CD4-positive, alpha-beta memory T cell (primary cell): ENCODE measurements at regions of chr19 and their contacts with region 1.

Region 1: DNA sequence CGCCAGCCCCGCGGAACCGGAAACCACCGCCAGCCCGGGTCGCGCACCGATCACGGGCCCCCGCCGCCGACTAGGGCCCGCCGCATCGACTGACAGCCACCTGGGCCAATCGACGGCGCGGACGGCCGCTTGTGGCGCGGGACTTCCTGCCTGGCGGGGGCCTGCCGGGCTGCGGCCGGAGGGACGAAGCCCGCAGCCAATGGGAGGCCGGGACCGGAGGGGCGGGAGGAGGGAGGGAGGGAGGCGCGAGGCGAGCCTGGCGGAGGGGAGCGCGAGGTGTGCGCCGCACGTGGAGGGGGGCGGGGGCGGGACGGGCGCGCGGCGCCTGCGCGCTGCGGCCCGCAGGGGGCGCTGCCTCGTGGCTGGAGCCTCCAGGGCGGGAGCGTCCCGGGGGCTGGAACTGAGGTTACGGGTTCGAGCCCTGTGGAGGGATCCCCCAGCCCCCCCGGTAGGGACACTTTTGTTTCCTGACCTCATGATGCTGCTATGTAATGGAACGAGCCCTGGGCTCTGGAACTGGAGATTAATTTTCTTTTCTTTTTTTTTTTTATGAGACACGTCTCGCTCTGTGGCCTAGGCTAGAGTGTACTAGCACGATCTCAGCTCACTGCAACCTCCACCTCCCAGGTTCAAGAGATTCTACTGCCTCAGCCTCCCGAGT is at the start of gene MLLT1:
- DNase-seq: peak; percentile 91 to 94 (median 93)
- H3K4me3 ChIP-seq: peak within 1 kb of the TSS; percentile 23 to 57
- H3K4me3 Mint-ChIP-seq: peak within 1 kb of the TSS; percentile 75 to 91 (median 90)
- H3K27ac ChIP-seq: peak within 1 kb of the TSS; percentile 59
- H3K27ac Mint-ChIP-seq: peak within 1 kb of the TSS; percentile 79 to 99 (median 96)
- H3K4me1 ChIP-seq: peaks cover 39% of the 10 kb centered on the region
- H3K4me1 Mint-ChIP-seq: peaks cover 29 to 45% (median 36%) of the 10 kb centered on the region in 4 donors
- H3K27me3 ChIP-seq: no peaks in the 10 kb centered on the region
- H3K27me3 Mint-ChIP-seq: peaks cover 0 to 2% of the 10 kb centered on the region in 2 donors
- total RNA-seq, gene MLLT1: 41.1 to 41.7 TPM

Region 2: DNA sequence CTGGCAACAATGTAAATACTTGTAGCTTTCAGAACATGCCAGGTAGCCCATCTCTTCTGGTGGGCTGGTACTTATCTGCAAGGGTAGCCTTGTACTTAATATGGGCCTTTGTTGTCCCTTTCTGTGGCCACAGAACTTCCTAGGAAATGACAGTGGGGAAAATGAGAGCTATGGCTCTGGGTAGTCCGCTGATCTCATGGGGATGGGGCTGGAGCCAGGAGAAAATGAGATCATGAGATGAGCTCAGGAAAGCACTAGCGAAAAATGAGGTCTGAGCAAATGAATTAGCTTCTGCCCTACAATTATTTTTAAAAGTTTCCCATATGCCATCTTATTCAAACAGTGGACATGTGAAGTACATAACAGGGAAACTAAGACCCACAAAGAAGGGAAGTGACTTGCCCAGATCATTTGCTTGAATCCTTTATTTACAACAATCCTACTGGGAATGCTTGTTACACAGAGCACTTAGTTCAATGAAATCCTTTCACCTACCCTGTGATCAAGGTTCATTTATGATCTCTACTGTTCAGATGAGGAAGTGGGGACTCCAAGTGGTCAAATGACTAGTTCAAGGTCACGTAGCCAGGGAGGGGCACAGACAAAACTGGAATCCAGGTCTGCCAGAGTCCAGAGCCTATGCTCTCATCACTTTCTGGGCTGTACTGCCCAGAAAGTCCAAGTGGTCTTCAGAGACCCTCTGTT is 1026.5 kb before region 1 on chr19:
- CTCF ChIA-PET with region 1: no interaction called
- POLR2A ChIA-PET with region 1: no interaction called
- intact Hi-C with region 1: no loop called
- DNase-seq: no peak
- H3K4me3 ChIP-seq: no peak overlapping the region
- H3K4me3 Mint-ChIP-seq: no peak overlapping the region
- H3K27ac ChIP-seq: no peak overlapping the region
- H3K27ac Mint-ChIP-seq: no peak overlapping the region
- H3K4me1 ChIP-seq: no peaks in the 10 kb centered on the region
- H3K4me1 Mint-ChIP-seq: no peaks in the 10 kb centered on the region
- H3K27me3 ChIP-seq: no peaks in the 10 kb centered on the region
- H3K27me3 Mint-ChIP-seq: peaks cover 3 to 4% of the 10 kb centered on the region in 2 donors

Region 3: DNA sequence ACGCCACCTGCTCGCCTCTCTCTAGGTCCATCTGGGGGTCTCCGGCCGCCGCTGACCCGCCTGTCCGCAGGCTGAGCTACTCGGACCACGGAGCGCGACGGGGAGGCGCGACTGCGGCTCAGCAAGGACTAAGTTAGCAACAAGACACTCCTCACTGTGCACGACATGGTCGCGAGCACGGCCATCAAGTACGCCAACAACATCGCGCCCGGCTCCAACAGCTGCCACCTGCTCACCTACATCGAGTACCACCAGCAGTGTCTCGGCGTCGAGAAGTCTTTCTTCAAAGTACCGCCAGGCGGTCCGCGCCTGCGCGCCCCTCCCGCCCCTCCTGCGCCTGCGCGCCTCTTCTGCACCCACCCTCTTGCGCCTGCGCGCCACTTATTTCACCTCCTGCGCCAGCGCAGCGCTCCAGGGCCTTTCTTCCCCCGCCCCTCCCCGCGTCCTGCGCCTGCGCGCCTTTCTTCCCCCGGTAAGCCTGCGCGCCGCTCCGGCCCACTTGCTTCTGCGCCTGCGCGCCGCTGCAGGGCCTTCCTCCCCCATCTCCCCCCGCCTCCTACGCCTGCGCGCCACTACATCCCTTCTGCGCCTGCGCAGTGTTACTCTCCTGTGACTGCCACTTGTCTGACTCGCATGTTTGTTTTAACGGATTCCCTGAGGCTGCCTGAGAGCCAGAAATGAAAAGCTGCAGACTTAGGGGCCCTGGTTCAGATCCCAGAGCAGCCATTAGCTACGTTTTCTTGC is 80.6 kb before region 1 on chr19:
- CTCF ChIA-PET with region 1: no interaction called
- POLR2A ChIA-PET with region 1: no interaction called
- intact Hi-C with region 1: loop called (anchors 1 kb)
- DNase-seq: peak; percentile 99 to 100 (median 99)
- H3K4me3 ChIP-seq: peak overlapping the region; percentile 52 to 89
- H3K4me3 Mint-ChIP-seq: peak overlapping the region; percentile 88 to 97 (median 94)
- H3K27ac ChIP-seq: peak overlapping the region; percentile 64
- H3K27ac Mint-ChIP-seq: peak overlapping the region; percentile 83 to 98 (median 95)
- H3K4me1 ChIP-seq: peaks cover 13% of the 10 kb centered on the region
- H3K4me1 Mint-ChIP-seq: peaks cover 10 to 21% (median 10%) of the 10 kb centered on the region in 4 donors
- H3K27me3 ChIP-seq: peaks cover 2% of the 10 kb centered on the region
- H3K27me3 Mint-ChIP-seq: peaks cover 2 to 4% of the 10 kb centered on the region in 2 donors

Region 4: GRCh38 chr19:6212403-6213265 is 67.4 kb before region 1 on chr19:
- CTCF ChIA-PET with region 1: no interaction called
- POLR2A ChIA-PET with region 1: no interaction called
- intact Hi-C with region 1: no loop called
- DNase-seq: no peak
- H3K4me3 ChIP-seq: no peak overlapping the region
- H3K4me3 Mint-ChIP-seq: no peak overlapping the region
- H3K27ac ChIP-seq: no peak overlapping the region
- H3K27ac Mint-ChIP-seq: peak overlapping the region in 1 of 7 donors; percentile 53
- H3K4me1 ChIP-seq: no peaks in the 10 kb centered on the region
- H3K4me1 Mint-ChIP-seq: no peaks in the 10 kb centered on the region
- H3K27me3 ChIP-seq: no peaks in the 10 kb centered on the region
- H3K27me3 Mint-ChIP-seq: no peaks in the 10 kb centered on the region

Region 5: GRCh38 chr19:6249296-6249695 is 30.8 kb before region 1 on chr19:
- CTCF ChIA-PET with region 1: no interaction called
- POLR2A ChIA-PET with region 1: no interaction called
- intact Hi-C with region 1: no loop called
- DNase-seq: no peak
- H3K4me3 ChIP-seq: no peak overlapping the region
- H3K4me3 Mint-ChIP-seq: no peak overlapping the region
- H3K27ac ChIP-seq: no peak overlapping the region
- H3K27ac Mint-ChIP-seq: no peak overlapping the region
- H3K4me1 ChIP-seq: peaks cover 4% of the 10 kb centered on the region
- H3K4me1 Mint-ChIP-seq: peaks cover 15 to 59% (median 44%) of the 10 kb centered on the region in 4 donors
- H3K27me3 ChIP-seq: no peaks in the 10 kb centered on the region
- H3K27me3 Mint-ChIP-seq: no peaks in the 10 kb centered on the region

Region 6: DNA sequence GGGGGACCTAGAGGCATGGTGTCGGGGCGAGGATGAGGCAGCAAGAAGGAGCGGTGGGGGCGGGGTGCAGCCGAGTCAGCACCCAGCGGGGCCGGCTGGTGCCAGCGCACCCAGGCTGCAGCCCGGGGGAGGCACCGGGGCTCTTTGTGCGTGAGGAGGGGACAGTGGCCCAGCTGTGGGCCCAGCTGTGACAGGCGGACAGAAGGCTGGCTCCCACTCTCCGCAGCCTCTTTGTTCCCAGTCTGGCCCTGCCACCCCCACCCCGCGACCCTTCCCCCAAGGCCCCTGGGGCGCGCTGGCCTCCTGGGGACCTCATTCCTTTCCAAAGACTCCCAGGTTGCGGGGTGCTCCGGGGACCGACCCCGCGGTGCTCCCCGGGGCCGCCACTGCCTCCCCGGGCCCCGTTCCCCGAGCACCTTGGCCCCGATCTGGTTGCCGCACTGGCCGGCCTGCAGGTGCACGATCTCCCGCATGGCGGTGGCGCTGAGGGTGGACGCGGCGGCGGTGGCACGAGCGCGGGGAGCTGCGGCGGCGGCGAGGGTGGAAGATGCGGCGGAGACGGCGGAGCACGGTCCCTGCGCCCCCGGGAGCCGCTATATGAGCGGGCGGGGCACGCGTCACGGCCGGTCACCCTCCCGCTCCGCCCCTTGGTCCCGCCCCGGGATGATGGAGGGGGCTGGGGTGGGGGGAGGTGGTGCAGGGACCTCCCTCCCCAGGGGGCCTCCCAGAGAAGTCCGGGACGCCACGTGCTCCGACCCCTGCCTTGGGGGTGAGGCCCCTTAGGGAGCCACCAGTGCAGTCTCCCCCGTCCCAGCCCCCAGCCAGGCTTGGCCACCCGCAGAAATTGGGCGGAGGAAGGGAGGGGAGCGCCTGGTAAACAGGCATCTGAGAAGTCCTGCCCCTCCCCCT is 221.9 kb after region 1 on chr19 and contains the start of gene TUBB4A:
- CTCF ChIA-PET with region 1: no interaction called
- POLR2A ChIA-PET with region 1: no interaction called
- intact Hi-C with region 1: loop called (anchors 5 kb)
- DNase-seq: peak in 3 of 5 donors; percentile 15 to 21 (median 17)
- H3K4me3 ChIP-seq: peak within 1 kb of the TSS in 1 of 2 donors; percentile 41
- H3K4me3 Mint-ChIP-seq: peak within 1 kb of the TSS; percentile 79 to 88 (median 84)
- H3K27ac ChIP-seq: no peak within 1 kb of the TSS
- H3K27ac Mint-ChIP-seq: peak within 1 kb of the TSS in 2 of 7 donors; percentile 42 to 81
- H3K4me1 ChIP-seq: peaks cover 18% of the 10 kb centered on the region
- H3K4me1 Mint-ChIP-seq: peaks cover 12 to 22% (median 16%) of the 10 kb centered on the region in 4 donors
- H3K27me3 ChIP-seq: peaks cover 7% of the 10 kb centered on the region
- H3K27me3 Mint-ChIP-seq: peaks cover 2 to 15% of the 10 kb centered on the region in 2 donors
- total RNA-seq, gene TUBB4A: 3.9 to 4.7 TPM

Region 7: DNA sequence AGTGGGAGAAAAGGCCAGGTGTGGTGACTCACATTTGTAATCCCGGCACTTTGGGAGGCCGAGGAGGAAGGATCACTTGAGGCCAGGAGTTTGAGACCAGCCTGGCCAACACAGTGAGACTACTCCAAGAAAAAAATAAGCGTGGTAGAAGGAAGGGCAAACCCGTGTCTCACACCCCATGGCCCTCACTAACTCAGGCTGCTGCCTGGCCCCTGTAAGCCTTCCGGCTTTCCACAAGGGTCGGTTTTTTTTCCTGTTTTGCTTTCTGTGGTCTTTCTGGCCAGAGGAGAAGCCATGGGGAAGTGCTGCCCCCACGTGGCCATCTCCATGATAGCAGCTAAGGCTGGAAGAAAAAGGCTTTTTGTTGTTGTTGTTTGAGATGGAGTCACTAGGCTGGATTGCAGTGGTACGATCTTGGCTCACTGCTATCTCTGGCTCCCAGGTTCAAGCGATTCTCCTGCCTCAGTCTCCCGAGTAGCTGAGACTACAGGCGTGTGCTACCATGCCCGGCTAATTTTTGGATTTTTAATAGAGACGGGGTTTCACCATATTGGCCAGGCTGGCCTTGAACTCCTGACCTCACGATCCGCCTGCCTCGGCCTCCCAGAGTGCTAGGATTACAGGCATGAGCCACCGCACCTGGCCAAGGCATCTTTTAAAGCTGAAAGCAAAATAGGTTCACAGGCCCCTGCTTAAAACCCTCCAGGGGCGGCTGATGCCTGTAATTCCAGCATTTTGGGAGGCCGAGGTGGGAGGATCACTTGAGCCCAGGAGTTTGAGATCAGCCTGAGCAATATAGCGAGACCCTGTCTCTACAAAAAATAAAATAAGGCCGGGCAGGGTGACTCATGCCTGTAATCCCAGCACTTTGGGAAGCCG is 1061.1 kb after region 1 on chr19:
- CTCF ChIA-PET with region 1: no interaction called
- POLR2A ChIA-PET with region 1: no interaction called
- intact Hi-C with region 1: no loop called
- DNase-seq: peak; percentile 70 to 81 (median 79)
- H3K4me3 ChIP-seq: no peak overlapping the region
- H3K4me3 Mint-ChIP-seq: peak overlapping the region in 6 of 8 donors; percentile 17 to 72 (median 66)
- H3K27ac ChIP-seq: no peak overlapping the region
- H3K27ac Mint-ChIP-seq: peak overlapping the region; percentile 54 to 92 (median 85)
- H3K4me1 ChIP-seq: peaks cover 67% of the 10 kb centered on the region
- H3K4me1 Mint-ChIP-seq: peaks cover 44 to 65% (median 50%) of the 10 kb centered on the region in 4 donors
- H3K27me3 ChIP-seq: no peaks in the 10 kb centered on the region
- H3K27me3 Mint-ChIP-seq: no peaks in the 10 kb centered on the region